Endothelial cell of umbilical vein (primary cell): ENCODE measurements at regions of chr15 and their contacts with region 1.

Region 1: GRCh38 chr15:74545880-74546656 is 5.0 kb downstream of the ARID3B start:
- DNase-seq: peak; percentile 99
- H3K4me3 ChIP-seq: no peak overlapping the region
- H3K27ac ChIP-seq: no peak overlapping the region
- H3K4me1 ChIP-seq: peaks cover 19% of the 10 kb centered on the region
- H3K27me3 ChIP-seq: no peaks in the 10 kb centered on the region
- CTCF ChIP-seq: no peak
- POLR2A ChIP-seq: peak; percentile 39

Region 2: DNA sequence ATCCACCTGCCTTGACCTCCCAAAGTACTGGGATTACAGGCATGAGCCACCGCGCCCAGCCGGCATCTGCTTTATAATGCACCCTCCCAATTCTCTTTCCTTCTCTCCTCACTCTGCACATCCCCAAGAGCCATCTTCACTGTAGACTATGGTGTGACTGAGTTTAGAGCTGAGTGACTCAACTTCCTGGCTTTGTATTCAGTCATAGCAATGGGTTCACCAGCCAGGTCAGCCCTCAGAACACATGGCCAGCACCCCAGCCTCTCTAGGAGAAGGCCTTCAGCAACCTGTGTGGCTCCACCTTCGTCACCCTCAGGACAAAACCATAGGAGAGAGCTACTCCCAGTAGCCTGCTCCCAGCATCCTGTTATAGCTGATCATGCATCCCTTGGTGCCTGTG is 27.9 kb after region 1 on chr15:
- CTCF ChIA-PET with region 1: interaction called, 4 read pairs
- POLR2A ChIA-PET with region 1: no interaction called
- dilution Hi-C with region 1: no loop called
- intact Hi-C with region 1: loop called (anchors 1 kb)
- DNase-seq: peak; percentile 72
- H3K4me3 ChIP-seq: no peak overlapping the region
- H3K27ac ChIP-seq: peak overlapping the region; percentile 86
- H3K4me1 ChIP-seq: peaks cover 21% of the 10 kb centered on the region
- H3K27me3 ChIP-seq: no peaks in the 10 kb centered on the region
- CTCF ChIP-seq: no peak
- POLR2A ChIP-seq: no peak

Region 3: GRCh38 chr15:74584779-74585178 is 38.7 kb after region 1 on chr15:
- CTCF ChIA-PET with region 1: interaction called, 4 read pairs
- POLR2A ChIA-PET with region 1: interaction called, 4 read pairs
- dilution Hi-C with region 1: no loop called
- intact Hi-C with region 1: loop called (anchors 1 kb)
- DNase-seq: no peak
- H3K4me3 ChIP-seq: no peak overlapping the region
- H3K27ac ChIP-seq: no peak overlapping the region
- H3K4me1 ChIP-seq: peaks cover 19% of the 10 kb centered on the region
- H3K27me3 ChIP-seq: no peaks in the 10 kb centered on the region
- CTCF ChIP-seq: no peak
- POLR2A ChIP-seq: no peak

Region 4: DNA sequence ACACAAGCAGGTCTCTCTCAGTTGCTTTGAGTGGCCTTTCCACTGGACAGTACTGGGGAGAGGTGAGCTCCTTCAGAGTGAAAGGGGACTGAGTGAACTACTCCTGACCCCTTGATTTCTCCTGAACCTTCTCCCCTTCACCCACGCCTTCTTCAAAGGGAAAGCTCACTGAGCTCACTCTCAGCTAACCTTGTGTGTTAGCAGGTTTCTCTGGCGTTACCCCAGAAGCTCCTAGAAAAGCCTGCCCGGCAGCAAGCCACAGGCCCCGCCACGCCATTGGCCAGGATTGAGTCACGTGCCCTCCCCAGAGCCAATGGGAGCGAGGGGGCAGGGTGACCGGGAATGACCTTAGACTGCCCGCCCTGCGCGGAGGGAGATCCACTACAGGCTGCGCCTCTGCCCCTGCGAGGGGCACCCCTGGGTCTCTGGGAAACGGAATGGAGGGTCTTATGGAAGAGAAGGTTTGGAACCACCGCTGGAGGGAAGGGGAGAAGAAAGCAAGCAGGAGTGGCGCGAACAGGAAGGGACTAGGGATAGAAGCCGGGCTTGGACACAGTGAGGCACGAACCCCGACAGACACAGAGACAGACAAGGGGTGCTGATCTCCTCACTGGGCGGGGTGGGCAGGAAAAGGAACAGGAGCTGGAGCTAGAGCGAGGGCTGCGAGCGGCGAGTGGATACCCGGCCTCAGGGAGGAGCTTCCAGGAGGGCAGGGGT is 52.2 kb after region 1 on chr15:
- CTCF ChIA-PET with region 1: interaction called, 6 read pairs
- POLR2A ChIA-PET with region 1: interaction called, 7 read pairs
- dilution Hi-C with region 1: no loop called
- intact Hi-C with region 1: loop called (anchors 1 kb)
- DNase-seq: peak; percentile 92
- H3K4me3 ChIP-seq: peak overlapping the region; percentile 52 to 69 (median 56)
- H3K27ac ChIP-seq: peak overlapping the region; percentile 38
- H3K4me1 ChIP-seq: peaks cover 12% of the 10 kb centered on the region
- H3K27me3 ChIP-seq: no peaks in the 10 kb centered on the region
- CTCF ChIP-seq: no peak
- POLR2A ChIP-seq: peak; percentile 83